ENCODE measurements at regions of chr2 and their contacts with region 1.

Region 1: DNA sequence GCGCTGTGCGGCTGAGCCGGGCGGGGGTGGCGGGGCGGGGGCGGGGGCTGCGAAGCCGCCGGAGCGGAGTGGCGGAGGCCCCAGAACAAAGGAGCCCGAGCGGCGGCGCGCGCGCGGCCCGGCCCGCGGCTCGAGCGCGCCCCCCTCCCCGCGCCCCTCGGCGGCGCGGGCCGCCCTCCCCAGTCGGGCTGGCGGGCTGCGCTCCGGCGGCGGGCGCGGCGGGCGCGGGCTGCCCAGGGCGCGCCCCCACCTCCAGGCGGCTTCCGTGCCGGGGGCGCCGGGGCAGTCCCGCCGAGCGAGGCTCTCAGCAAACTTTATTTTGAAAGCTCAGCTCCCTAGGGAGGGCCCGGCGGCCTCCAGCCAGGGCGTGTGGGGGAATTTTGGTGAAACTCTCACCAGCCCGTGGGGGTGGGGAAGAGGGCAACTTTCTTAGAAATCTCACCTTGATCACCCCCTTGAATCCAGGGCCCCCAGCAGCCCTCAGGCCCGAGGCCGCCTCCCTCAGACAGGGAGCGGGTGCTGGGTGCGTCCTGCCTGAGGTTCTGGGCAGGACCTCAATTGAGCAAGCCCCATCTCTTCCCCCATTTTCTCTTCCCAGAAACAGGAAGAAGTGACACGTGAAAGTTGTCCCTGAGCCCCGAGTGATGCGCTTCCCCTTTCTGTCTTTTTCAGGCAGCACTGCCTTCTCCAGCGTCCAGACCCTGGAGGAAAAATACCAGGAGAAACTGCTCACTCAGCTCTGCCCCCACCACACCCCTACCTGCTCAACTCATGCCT is 786 bp downstream of the TET3 start:
- DNase-seq: peak; percentile 77
- H3K4me3 Mint-ChIP-seq: peak overlapping the region; percentile 80
- H3K27ac Mint-ChIP-seq: peak overlapping the region; percentile 90
- H3K4me1 Mint-ChIP-seq: peaks cover 64% of the 10 kb centered on the region
- H3K27me3 Mint-ChIP-seq: no peaks in the 10 kb centered on the region

Region 2: GRCh38 chr2:73920577-73921545 is 64.6 kb before region 1 on chr2:
- CTCF ChIA-PET with region 1: interaction called, 4 read pairs
- intact Hi-C with region 1: loop called (anchors 1 kb)
- DNase-seq: peak; percentile 71
- H3K4me3 Mint-ChIP-seq: no peak overlapping the region
- H3K27ac Mint-ChIP-seq: no peak overlapping the region
- H3K4me1 Mint-ChIP-seq: peaks cover 5% of the 10 kb centered on the region
- H3K27me3 Mint-ChIP-seq: no peaks in the 10 kb centered on the region

Region 3: GRCh38 chr2:73939419-73939818 is 46.1 kb before region 1 on chr2:
- CTCF ChIA-PET with region 1: interaction called, 5 read pairs
- intact Hi-C with region 1: loop called (anchors 1 kb)
- DNase-seq: peak; percentile 76
- H3K4me3 Mint-ChIP-seq: no peak overlapping the region
- H3K27ac Mint-ChIP-seq: peak overlapping the region; percentile 76
- H3K4me1 Mint-ChIP-seq: peaks cover 84% of the 10 kb centered on the region
- H3K27me3 Mint-ChIP-seq: no peaks in the 10 kb centered on the region

Region 4: DNA sequence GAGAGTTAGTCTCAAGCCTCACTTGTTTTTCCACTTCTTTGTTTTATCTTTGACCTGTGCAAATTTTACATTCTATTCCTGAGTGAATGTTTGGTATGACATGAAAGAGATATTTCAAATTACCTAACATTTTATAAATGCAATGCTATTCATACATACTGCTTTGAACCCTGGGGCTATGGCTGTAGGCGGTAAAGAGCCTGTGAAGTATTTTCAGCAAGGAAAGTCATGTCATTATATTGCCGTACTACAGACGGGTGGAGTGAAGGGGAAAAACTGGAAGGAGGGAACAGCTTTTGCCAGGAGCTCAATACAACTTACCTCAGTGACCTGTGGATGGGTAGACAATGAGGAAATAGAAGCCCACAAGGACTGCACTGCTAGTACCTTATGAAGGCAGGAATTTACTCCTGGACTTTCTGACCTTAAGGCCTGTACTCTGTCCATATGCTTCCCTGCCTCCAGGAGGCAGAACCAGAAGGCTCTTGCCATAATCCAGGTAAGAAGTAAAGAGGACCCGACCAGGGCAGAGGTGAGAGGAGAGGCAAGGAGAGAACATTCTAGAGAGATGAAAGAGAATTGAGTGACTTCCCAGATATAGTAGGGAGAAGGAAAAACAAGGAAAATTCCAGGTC is 29.1 kb before region 1 on chr2:
- CTCF ChIA-PET with region 1: no interaction called
- intact Hi-C with region 1: no loop called
- DNase-seq: no peak
- H3K4me3 Mint-ChIP-seq: no peak overlapping the region
- H3K27ac Mint-ChIP-seq: no peak overlapping the region
- H3K4me1 Mint-ChIP-seq: peaks cover 33% of the 10 kb centered on the region
- H3K27me3 Mint-ChIP-seq: no peaks in the 10 kb centered on the region

Region 5: DNA sequence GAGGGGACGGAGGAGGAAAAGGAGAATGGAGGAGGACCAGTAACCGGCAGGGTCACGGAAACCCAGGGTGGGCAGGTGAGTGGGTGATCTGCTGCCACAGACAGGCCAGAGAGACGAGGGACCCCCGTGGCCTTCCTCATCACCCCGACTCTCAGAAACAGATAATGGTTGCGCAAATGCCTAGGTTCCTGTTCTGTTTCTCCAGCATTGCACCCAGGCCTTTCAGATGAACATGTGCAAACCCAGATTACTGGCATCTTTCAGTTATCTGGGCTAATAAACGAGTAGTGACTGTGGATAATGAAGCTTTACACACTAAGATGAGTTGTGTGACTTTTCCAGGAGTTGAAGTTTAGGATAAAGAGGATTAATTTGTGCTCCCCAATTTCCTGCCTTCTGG is 45.7 kb after region 1 on chr2:
- CTCF ChIA-PET with region 1: no interaction called
- intact Hi-C with region 1: loop called (anchors 5 kb)
- DNase-seq: no peak
- H3K4me3 Mint-ChIP-seq: peak overlapping the region; percentile 84
- H3K27ac Mint-ChIP-seq: peak overlapping the region; percentile 99
- H3K4me1 Mint-ChIP-seq: peaks cover 83% of the 10 kb centered on the region
- H3K27me3 Mint-ChIP-seq: no peaks in the 10 kb centered on the region

Region 6: DNA sequence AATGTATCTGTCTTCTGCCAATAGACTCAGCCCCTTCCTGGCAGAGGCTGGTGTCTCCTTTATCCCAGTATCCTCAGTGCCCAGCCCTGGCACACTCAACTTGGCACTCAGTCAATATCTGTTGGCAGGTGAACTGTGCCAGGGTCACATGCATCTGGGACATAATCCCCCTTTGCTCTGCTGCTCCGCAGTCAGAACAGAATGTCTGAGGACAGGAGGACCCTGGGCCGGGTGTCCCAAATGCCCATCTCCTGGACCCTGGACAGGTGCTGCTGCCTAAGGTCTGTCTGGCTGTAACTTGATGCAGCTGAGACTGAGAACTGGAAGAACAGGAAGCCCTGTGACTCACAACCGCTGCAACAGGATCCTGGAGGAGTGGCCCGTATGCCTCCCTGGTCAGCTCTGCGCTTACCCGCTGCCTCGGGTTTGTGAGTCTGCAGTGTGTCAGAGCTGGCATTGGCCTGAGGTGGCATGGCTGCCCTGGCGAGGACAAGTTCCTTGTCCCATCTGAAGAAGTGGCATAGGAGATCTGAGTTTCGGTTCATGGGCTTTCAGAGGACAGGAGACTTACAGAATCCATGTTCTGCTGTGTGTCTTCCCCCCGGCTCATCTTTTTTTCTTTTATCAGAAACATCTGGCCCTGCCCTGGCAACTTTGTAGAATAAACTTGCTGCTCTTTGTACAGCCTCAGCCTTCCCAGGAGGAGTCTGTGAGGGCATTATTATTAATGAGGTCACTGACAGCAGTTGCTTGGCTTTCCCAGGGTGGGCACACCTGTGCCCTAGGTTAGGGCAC is 859.9 kb after region 1 on chr2:
- CTCF ChIA-PET with region 1: no interaction called
- intact Hi-C with region 1: loop called (anchors 5 kb)
- DNase-seq: peak; percentile 61
- H3K4me3 Mint-ChIP-seq: no peak overlapping the region
- H3K27ac Mint-ChIP-seq: peak overlapping the region; percentile 33
- H3K4me1 Mint-ChIP-seq: peaks cover 95% of the 10 kb centered on the region
- H3K27me3 Mint-ChIP-seq: no peaks in the 10 kb centered on the region

Measured in activated naive CD4-positive, alpha-beta T cell treated with anti-CD3 and anti-CD28 coated beads for 36 hours (primary cell).